K562 (cell line): ENCODE measurements at regions of chr9 and their contacts with region 1.

Region 1: DNA sequence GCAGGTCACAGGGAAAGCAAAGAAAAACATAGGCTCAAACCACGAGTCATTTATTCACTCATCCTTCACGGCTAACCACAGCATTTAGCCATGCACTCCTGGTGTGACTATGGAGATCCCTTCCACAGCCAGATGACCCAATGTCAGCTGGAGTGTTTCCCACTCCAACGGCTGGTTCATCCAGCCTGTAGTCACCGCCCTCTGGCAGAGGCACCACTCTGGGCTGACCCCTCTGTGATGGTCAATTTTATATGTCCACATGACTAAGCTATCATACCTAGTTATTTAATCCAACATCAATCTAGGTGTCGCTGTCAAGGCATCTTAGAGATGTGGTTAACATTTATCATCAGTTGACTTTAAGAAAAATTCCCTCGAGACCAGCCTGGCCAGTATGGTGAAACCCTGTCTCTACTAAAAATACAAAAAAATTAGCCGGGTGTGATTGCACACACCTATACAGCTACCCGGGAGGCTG is 9.5 kb upstream of the PHF19 start:
- DNase-seq: no peak
- ATAC-seq: peak; percentile 3; the same call in 2 of the 3 replicates
- H3K4me3 ChIP-seq: no peak overlapping the region
- H3K27ac ChIP-seq: no peak overlapping the region
- H3K4me1 ChIP-seq: peaks cover 22 to 32% of the 10 kb centered on the region in 2 experiments
- H3K27me3 ChIP-seq: no peaks in the 10 kb centered on the region
- CTCF ChIP-seq: no peak
- EP300 ChIP-seq: no peak
- POLR2A ChIP-seq: no peak
- RAD21 ChIP-seq: no peak

Region 2: DNA sequence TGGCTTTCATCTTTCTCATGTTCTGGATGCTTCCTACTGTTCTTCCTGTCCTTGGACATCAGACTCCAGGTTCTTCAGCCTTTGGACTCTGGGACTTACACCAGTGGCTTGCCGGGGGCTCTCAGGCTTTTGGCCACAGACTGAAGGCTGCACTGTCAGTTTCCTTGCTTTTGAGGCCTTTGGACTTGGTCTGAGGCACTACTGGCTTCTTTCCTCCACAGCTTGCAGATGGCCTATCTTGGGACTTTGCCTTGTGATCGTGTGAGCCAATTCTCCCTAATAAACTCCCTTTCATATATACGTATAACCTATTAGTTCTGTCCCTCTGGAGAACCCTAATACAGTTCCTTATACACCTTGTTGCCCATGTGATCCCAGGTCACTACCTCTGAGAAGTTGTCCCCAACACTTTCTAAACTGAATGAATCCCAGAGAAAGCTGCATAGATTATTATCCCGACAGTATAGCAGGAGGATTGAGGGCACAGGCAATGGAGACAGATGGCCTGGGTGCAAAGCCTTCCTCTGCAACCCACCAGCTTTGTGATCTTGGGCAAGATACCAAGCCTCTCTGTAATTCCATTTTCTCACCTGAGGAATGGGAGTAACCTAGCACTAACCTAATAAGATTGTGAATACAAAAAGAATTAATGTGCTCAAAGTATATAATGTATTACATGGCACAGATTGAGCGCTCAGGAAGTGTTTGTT is 1067.6 kb before region 1 on chr9:
- CTCF ChIA-PET with region 1: no interaction called
- POLR2A ChIA-PET with region 1: no interaction called
- in situ Hi-C with region 1: no loop called
- intact Hi-C with region 1: no loop called
- DNase-seq: no peak
- ATAC-seq: no peak
- H3K4me3 ChIP-seq: no peak overlapping the region
- H3K27ac ChIP-seq: no peak overlapping the region
- H3K4me1 ChIP-seq: no peaks in the 10 kb centered on the region
- H3K27me3 ChIP-seq: no peaks in the 10 kb centered on the region
- CTCF ChIP-seq: no peak
- EP300 ChIP-seq: no peak
- POLR2A ChIP-seq: no peak
- RAD21 ChIP-seq: no peak

Region 3: DNA sequence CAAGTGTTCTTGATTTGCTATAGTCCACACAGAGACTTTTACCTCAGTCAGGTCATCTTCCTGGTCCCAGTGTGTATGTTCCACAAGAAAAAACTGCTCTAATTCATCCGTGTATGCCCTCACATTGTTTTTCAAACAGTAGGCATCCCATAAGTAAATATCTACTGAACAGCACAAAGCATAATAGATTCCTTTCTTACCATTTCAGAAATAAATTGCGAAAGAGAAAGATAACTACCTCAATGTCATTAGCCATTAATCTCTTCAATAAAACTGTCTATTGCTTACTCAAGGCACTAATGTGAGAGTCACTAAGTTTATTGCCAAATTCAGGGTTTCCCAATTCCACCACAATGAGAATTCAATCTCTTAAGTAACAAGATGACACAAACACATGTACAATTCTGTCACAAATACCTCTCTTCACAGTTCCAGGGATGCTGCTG is 102.9 kb before region 1 on chr9:
- CTCF ChIA-PET with region 1: no interaction called
- POLR2A ChIA-PET with region 1: no interaction called
- in situ Hi-C with region 1: no loop called
- intact Hi-C with region 1: no loop called
- DNase-seq: no peak
- ATAC-seq: no peak
- H3K4me3 ChIP-seq: no peak overlapping the region
- H3K27ac ChIP-seq: no peak overlapping the region
- H3K4me1 ChIP-seq: peaks cover 0 to 11% of the 10 kb centered on the region in 2 experiments; a peak in 2 of 5 replicates
- H3K27me3 ChIP-seq: no peaks in the 10 kb centered on the region
- CTCF ChIP-seq: no peak
- EP300 ChIP-seq: no peak
- POLR2A ChIP-seq: no peak
- RAD21 ChIP-seq: no peak

Region 4: GRCh38 chr9:120909904-120910303 is 23.4 kb after region 1 on chr9:
- CTCF ChIA-PET with region 1: no interaction called
- POLR2A ChIA-PET with region 1: interaction called, 464 read pairs
- in situ Hi-C with region 1: no loop called
- intact Hi-C with region 1: loop called (anchors 1 kb)
- DNase-seq: no peak
- ATAC-seq: no peak
- H3K4me3 ChIP-seq: no peak overlapping the region
- H3K27ac ChIP-seq: no peak overlapping the region
- H3K4me1 ChIP-seq: peaks cover 20 to 22% of the 10 kb centered on the region in 2 experiments; a peak in 4 of 5 replicates
- H3K27me3 ChIP-seq: no peaks in the 10 kb centered on the region
- CTCF ChIP-seq: no peak
- EP300 ChIP-seq: no peak
- POLR2A ChIP-seq: no peak
- RAD21 ChIP-seq: no peak

Region 5: GRCh38 chr9:121299467-121300234 is 413.1 kb after region 1 on chr9:
- CTCF ChIA-PET with region 1: no interaction called
- POLR2A ChIA-PET with region 1: no interaction called
- in situ Hi-C with region 1: no loop called
- intact Hi-C with region 1: no loop called
- DNase-seq: no peak
- ATAC-seq: no peak
- H3K4me3 ChIP-seq: no peak overlapping the region
- H3K27ac ChIP-seq: no peak overlapping the region
- H3K4me1 ChIP-seq: peaks cover 6 to 23% of the 10 kb centered on the region in 2 experiments; a peak in 4 of 5 replicates
- H3K27me3 ChIP-seq: no peaks in the 10 kb centered on the region
- CTCF ChIP-seq: no peak
- EP300 ChIP-seq: no peak
- POLR2A ChIP-seq: no peak
- RAD21 ChIP-seq: no peak